ENCODE measurements at regions of chr2 and their contacts with region 1.

Region 1: DNA sequence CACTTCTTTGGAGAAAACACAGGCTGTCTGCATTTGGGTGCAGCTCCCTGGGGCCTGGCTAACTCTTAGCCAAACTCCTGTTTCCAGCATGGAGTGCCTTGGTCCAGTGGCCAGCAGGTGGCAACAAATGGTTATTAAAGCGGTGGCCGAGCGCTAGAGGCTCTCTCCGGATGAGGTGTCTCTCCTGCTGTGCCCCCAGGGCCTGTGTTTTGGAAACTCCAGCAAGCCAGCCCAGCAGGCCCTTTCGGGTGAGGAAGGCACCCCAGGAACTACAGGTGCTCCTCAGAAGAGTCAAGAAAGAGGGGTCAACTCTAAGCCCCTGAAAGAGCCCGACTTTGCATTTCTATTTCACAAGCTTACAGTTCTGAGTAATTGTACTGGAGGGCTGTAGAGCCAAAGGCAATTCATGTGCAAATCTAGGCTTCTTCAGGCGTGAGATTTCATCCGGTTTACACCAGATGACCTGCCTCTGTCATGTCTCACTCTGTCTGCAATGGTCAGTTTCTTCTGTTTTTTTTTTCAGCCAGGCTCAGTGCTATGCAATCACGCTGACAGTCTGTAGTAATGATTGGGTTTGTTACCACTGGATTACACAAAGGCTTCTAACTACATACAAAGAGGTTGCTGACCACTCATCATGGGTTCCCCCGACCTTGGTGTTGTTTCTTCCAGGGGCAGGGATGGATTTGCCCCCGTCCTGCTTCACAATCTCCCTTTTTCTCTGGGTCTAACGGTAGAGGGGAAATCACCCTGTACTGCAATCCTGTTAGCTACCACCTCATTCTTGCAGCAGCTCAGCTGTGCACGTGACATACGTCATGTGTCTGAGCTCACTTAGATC is 7.6 kb upstream of the CHRNA1 start:
- DNase-seq: peak; percentile 48
- H3K4me3 ChIP-seq: no peak overlapping the region
- H3K27ac ChIP-seq: no peak overlapping the region
- H3K4me1 ChIP-seq: no peaks in the 10 kb centered on the region
- H3K27me3 ChIP-seq: no peaks in the 10 kb centered on the region
- CTCF ChIP-seq: peak; percentile 40 to 84 (median 72)
- POLR2A ChIP-seq: no peak

Region 2: GRCh38 chr2:174985630-174986029 is 213.8 kb after region 1 on chr2:
- intact Hi-C with region 1: loop called (anchors 1 kb)
- DNase-seq: no peak
- H3K4me3 ChIP-seq: no peak overlapping the region
- H3K27ac ChIP-seq: no peak overlapping the region
- H3K4me1 ChIP-seq: no peaks in the 10 kb centered on the region
- H3K27me3 ChIP-seq: no peaks in the 10 kb centered on the region
- CTCF ChIP-seq: peak in 3 of 4 experiments; percentile 45 to 61 (median 52)
- POLR2A ChIP-seq: no peak